MCF 10A (cell line): ENCODE measurements at regions of chr16 and their contacts with region 1.

Region 1: GRCh38 chr16:69204172-69204571 is 17.2 kb downstream of the SNTB2 start:
- DNase-seq: no peak
- H3K4me3 Mint-ChIP-seq: no peak overlapping the region
- H3K27ac Mint-ChIP-seq: peak overlapping the region; percentile 89
- H3K4me1 Mint-ChIP-seq: peaks cover 35% of the 10 kb centered on the region
- H3K27me3 Mint-ChIP-seq: no peaks in the 10 kb centered on the region
- CTCF ChIP-seq: no peak

Region 2: GRCh38 chr16:69171325-69172084 is 32.7 kb before region 1 on chr16:
- CTCF ChIA-PET with region 1: interaction called, 4 read pairs
- POLR2A ChIA-PET with region 1: interaction called, 17 read pairs
- intact Hi-C with region 1: no loop called
- DNase-seq: no peak
- H3K4me3 Mint-ChIP-seq: no peak overlapping the region
- H3K27ac Mint-ChIP-seq: no peak overlapping the region
- H3K4me1 Mint-ChIP-seq: peaks cover 11% of the 10 kb centered on the region
- H3K27me3 Mint-ChIP-seq: no peaks in the 10 kb centered on the region
- CTCF ChIP-seq: no peak

Region 3: DNA sequence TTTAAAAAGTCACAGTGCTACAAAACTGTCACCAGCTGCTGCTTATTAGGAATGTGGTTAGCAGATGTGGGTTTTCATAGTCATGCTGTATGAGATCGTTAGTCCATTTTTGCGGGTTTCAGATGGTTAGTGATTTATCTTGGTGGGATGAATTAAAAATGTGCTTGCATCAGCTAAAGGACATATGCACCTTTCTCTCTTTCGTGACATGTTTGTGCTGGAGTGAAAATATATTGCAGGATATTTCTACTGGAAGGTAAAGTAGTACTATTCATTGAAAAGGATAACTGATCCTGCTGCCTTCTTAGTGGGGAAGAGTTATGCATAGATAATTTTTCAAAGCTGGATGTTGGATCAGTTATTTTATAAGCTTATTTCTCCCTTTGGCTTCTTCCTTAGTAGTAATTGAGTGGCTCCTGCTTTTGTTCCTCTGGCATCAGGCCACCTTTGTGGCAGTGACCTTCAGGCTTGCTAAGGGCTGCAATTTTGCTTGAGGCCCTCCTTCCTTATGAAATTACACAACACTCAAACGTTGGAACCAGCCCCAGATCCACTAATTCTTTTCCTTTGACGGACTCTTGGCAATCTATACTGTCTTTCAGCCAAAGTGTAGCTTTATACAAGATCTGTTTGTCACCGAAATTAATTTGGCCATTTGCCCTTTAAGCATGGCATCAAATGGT is 24.7 kb before region 1 on chr16:
- CTCF ChIA-PET with region 1: interaction called, 4 read pairs
- POLR2A ChIA-PET with region 1: interaction called, 17 read pairs
- intact Hi-C with region 1: no loop called
- DNase-seq: peak; percentile 96
- H3K4me3 Mint-ChIP-seq: peak overlapping the region; percentile 11
- H3K27ac Mint-ChIP-seq: peak overlapping the region; percentile 56
- H3K4me1 Mint-ChIP-seq: peaks cover 23% of the 10 kb centered on the region
- H3K27me3 Mint-ChIP-seq: no peaks in the 10 kb centered on the region
- CTCF ChIP-seq: no peak

Region 4: GRCh38 chr16:69217433-69217832 is 13.3 kb after region 1 on chr16:
- CTCF ChIA-PET with region 1: no interaction called
- POLR2A ChIA-PET with region 1: interaction called, 42 read pairs
- intact Hi-C with region 1: loop called (anchors 2 kb)
- DNase-seq: peak; percentile 30
- H3K4me3 Mint-ChIP-seq: peak overlapping the region; percentile 33
- H3K27ac Mint-ChIP-seq: peak overlapping the region; percentile 12
- H3K4me1 Mint-ChIP-seq: peaks cover 17% of the 10 kb centered on the region
- H3K27me3 Mint-ChIP-seq: no peaks in the 10 kb centered on the region
- CTCF ChIP-seq: no peak

Region 5: GRCh38 chr16:69240331-69240730 is 36.2 kb after region 1 on chr16:
- CTCF ChIA-PET with region 1: no interaction called
- POLR2A ChIA-PET with region 1: no interaction called
- intact Hi-C with region 1: no loop called
- DNase-seq: no peak
- H3K4me3 Mint-ChIP-seq: no peak overlapping the region
- H3K27ac Mint-ChIP-seq: no peak overlapping the region
- H3K4me1 Mint-ChIP-seq: no peaks in the 10 kb centered on the region
- H3K27me3 Mint-ChIP-seq: no peaks in the 10 kb centered on the region
- CTCF ChIP-seq: no peak